ENCODE measurements at regions of chr11 and their contacts with region 1.

Region 1: DNA sequence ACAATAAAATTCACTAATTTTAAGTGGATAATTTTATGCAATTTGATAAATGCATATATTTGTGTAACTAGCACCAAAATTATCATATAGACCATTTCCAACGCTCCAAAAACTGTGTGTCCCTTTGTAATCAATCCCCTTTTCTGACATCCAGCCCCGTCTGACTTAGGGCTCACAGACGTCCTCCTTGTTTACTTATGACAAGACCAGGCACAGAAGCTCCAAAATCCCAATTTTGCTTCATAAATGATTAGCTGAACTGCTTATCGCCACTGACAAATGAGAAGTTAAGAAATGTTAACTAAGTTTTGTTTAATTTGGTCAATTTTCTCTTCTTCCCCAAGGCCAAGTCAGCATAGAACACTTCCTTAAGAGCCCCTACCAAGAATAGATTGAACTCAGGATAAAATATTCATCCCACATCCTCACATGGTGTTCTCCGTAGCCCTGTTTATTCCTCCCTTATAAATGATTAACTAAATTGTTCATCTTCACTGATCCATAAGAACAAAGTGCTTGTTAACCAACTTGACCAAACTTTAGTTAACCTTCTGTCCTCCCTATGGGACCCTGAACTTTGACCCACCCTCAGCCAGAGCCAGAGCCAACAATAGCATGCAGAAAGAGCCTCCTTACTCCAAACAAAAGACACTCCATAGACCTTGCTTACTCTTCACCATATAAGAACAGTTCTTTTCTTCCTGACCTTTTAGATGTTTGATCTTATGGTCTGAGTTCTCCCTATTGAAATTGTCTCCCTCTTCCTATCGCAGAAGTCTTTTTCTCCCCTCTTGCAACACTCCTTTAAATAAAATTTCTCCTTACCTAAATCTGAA is 30.8 kb upstream of the GLYAT start:
- DNase-seq: peak; percentile 96
- ATAC-seq: peak; percentile 99
- H3K4me3 ChIP-seq: peak overlapping the region; percentile 3 to 46 (median 32); a peak in 3 of 6 replicates
- H3K27ac ChIP-seq: peak overlapping the region; percentile 85
- H3K4me1 ChIP-seq: peaks cover 55% of the 10 kb centered on the region
- H3K27me3 ChIP-seq: no peaks in the 10 kb centered on the region
- CTCF ChIP-seq: no peak
- EP300 ChIP-seq: peak in 1 of 2 experiments; percentile 92; a peak in 2 of 4 replicates
- POLR2A ChIP-seq: no peak
- RAD21 ChIP-seq: no peak

Region 2: DNA sequence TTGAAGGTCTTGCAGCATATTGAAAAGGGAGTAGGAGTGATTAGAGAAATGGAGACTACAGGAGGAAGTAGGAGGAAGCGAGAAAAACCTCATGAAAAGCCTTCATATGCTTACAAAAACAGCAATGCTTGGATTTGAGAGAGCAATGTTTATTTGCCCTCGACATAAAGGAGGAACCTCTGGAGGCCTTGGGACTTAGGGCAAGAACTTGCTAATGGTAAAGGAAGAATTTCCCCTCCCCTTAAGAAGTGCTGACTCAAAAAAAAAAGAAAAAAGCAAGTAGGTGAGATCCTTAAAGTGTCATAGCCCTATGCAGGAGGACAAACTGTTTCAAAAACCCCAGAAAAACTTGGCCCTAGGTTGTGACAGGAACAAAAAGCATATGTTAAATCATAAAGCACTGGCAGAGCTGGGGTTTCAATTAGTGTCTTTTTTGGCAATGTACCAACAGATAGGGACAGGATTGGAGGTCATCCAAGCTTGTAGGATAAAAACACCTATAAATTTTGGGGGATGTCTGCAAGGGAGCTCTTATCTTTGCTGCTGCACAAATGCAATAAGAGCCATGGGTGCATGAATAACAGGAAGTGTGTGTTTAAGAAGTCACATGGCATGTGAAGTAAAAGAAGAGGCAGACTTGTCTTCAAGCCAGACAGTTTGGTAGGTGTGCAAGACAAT is 35.6 kb before region 1 on chr11:
- CTCF ChIA-PET with region 1: no interaction called
- POLR2A ChIA-PET with region 1: no interaction called
- in situ Hi-C with region 1: no loop called
- intact Hi-C with region 1: no loop called
- DNase-seq: no peak
- ATAC-seq: no peak
- H3K4me3 ChIP-seq: no peak overlapping the region
- H3K27ac ChIP-seq: no peak overlapping the region
- H3K4me1 ChIP-seq: peaks cover 5% of the 10 kb centered on the region
- H3K27me3 ChIP-seq: no peaks in the 10 kb centered on the region; a peak in 1 of 5 replicates
- CTCF ChIP-seq: no peak
- EP300 ChIP-seq: no peak
- POLR2A ChIP-seq: no peak
- RAD21 ChIP-seq: no peak

Region 3: DNA sequence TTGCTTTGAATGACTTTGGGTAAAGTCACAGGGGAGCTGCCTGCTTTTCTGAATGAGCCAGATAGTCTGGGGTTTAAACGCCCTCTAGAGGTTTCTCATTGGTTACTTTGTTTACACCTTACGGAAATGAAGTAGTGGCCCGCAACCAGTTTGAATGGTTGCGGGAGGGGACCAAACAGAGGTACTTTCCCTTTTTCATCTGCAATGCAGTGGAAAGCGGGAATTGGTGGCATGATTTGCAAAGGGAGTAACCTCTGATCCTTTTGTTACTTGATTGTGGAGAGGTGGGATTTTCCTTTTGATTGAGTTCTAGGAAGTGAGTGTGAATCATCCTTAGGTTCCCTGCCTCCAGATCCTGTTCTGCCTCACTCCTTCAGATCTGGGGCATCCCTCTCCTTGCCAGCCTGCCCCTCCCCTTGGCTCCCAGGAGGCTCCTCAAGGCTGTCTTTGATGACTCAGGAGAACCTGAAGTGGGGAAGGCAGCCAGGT is 160.8 kb after region 1 on chr11:
- CTCF ChIA-PET with region 1: no interaction called
- POLR2A ChIA-PET with region 1: no interaction called
- in situ Hi-C with region 1: no loop called
- intact Hi-C with region 1: loop called (anchors 10 kb)
- DNase-seq: peak; percentile 13
- ATAC-seq: peak; percentile 42; the same call in 2 of the 3 replicates
- H3K4me3 ChIP-seq: no peak overlapping the region
- H3K27ac ChIP-seq: no peak overlapping the region
- H3K4me1 ChIP-seq: peaks cover 35% of the 10 kb centered on the region
- H3K27me3 ChIP-seq: peaks cover 2 to 7% of the 10 kb centered on the region in 2 experiments; a peak in 3 of 5 replicates
- CTCF ChIP-seq: peak; percentile 53
- EP300 ChIP-seq: no peak
- POLR2A ChIP-seq: no peak
- RAD21 ChIP-seq: no peak